ENCODE measurements at regions of chr3 and their contacts with region 1.

Region 1: GRCh38 chr3:120147072-120147871 is 53.0 kb upstream of the GSK3B start:
- DNase-seq: peak; percentile 47 to 60 (median 52)
- H3K4me3 ChIP-seq: no peak overlapping the region
- H3K4me3 Mint-ChIP-seq: no peak overlapping the region
- H3K27ac ChIP-seq: no peak overlapping the region
- H3K27ac Mint-ChIP-seq: peak overlapping the region in 1 of 7 donors; percentile 44
- H3K4me1 ChIP-seq: peaks cover 3% of the 10 kb centered on the region
- H3K4me1 Mint-ChIP-seq: peaks cover 4 to 13% (median 6%) of the 10 kb centered on the region in 4 donors
- H3K27me3 ChIP-seq: no peaks in the 10 kb centered on the region
- H3K27me3 Mint-ChIP-seq: no peaks in the 10 kb centered on the region

Region 2: GRCh38 chr3:119819806-119820205 is 327.5 kb before region 1 on chr3:
- CTCF ChIA-PET with region 1: interaction called, 9 read pairs
- POLR2A ChIA-PET with region 1: no interaction called
- intact Hi-C with region 1: loop called (anchors 1 kb)
- DNase-seq: no peak
- H3K4me3 ChIP-seq: no peak overlapping the region
- H3K4me3 Mint-ChIP-seq: no peak overlapping the region
- H3K27ac ChIP-seq: no peak overlapping the region
- H3K27ac Mint-ChIP-seq: peak overlapping the region in 1 of 7 donors; percentile 42
- H3K4me1 ChIP-seq: no peaks in the 10 kb centered on the region
- H3K4me1 Mint-ChIP-seq: peaks cover 0 to 6% (median 4%) of the 10 kb centered on the region in 4 donors
- H3K27me3 ChIP-seq: no peaks in the 10 kb centered on the region
- H3K27me3 Mint-ChIP-seq: peaks cover 0 to 4% of the 10 kb centered on the region in 2 donors

Region 3: GRCh38 chr3:119898478-119899191 is 248.6 kb before region 1 on chr3:
- CTCF ChIA-PET with region 1: interaction called, 181 read pairs
- POLR2A ChIA-PET with region 1: no interaction called
- intact Hi-C with region 1: no loop called
- DNase-seq: no peak
- H3K4me3 ChIP-seq: no peak overlapping the region
- H3K4me3 Mint-ChIP-seq: no peak overlapping the region
- H3K27ac ChIP-seq: no peak overlapping the region
- H3K27ac Mint-ChIP-seq: peak overlapping the region in 2 of 7 donors; percentile 41 to 53
- H3K4me1 ChIP-seq: no peaks in the 10 kb centered on the region
- H3K4me1 Mint-ChIP-seq: peaks cover 0 to 5% (median 0%) of the 10 kb centered on the region in 4 donors
- H3K27me3 ChIP-seq: no peaks in the 10 kb centered on the region
- H3K27me3 Mint-ChIP-seq: no peaks in the 10 kb centered on the region

Region 4: DNA sequence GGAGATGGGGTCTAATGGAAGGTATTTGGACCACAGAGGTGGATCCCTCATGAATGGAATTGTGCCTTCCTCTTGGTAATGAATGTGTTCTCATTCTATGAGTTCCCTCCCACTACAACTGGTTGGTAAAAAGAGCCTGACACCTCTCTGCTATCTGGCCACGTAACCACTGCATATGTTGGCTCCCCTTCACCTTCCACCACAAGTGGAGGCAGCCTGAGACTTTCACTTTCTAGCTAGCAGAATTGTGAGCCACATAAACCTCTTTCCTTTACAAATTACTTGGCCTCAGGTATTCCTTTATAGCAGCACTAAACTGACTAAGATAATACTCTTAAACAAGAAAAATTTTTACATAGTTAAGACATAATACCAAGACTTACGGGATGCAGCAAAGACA is 210.0 kb before region 1 on chr3:
- CTCF ChIA-PET with region 1: no interaction called
- POLR2A ChIA-PET with region 1: no interaction called
- intact Hi-C with region 1: no loop called
- DNase-seq: peak; percentile 16 to 43 (median 21)
- H3K4me3 ChIP-seq: no peak overlapping the region
- H3K4me3 Mint-ChIP-seq: peak overlapping the region; percentile 41 to 79 (median 68)
- H3K27ac ChIP-seq: no peak overlapping the region
- H3K27ac Mint-ChIP-seq: peak overlapping the region; percentile 0 to 93 (median 29)
- H3K4me1 ChIP-seq: peaks cover 26% of the 10 kb centered on the region
- H3K4me1 Mint-ChIP-seq: peaks cover 41 to 56% (median 50%) of the 10 kb centered on the region in 4 donors
- H3K27me3 ChIP-seq: no peaks in the 10 kb centered on the region
- H3K27me3 Mint-ChIP-seq: no peaks in the 10 kb centered on the region

Region 5: GRCh38 chr3:119976214-119976613 is 171.1 kb before region 1 on chr3:
- CTCF ChIA-PET with region 1: no interaction called
- POLR2A ChIA-PET with region 1: no interaction called
- intact Hi-C with region 1: no loop called
- DNase-seq: no peak
- H3K4me3 ChIP-seq: no peak overlapping the region
- H3K4me3 Mint-ChIP-seq: no peak overlapping the region
- H3K27ac ChIP-seq: no peak overlapping the region
- H3K27ac Mint-ChIP-seq: no peak overlapping the region
- H3K4me1 ChIP-seq: peaks cover 3% of the 10 kb centered on the region
- H3K4me1 Mint-ChIP-seq: peaks cover 31 to 54% (median 38%) of the 10 kb centered on the region in 4 donors
- H3K27me3 ChIP-seq: no peaks in the 10 kb centered on the region
- H3K27me3 Mint-ChIP-seq: no peaks in the 10 kb centered on the region

Region 6: DNA sequence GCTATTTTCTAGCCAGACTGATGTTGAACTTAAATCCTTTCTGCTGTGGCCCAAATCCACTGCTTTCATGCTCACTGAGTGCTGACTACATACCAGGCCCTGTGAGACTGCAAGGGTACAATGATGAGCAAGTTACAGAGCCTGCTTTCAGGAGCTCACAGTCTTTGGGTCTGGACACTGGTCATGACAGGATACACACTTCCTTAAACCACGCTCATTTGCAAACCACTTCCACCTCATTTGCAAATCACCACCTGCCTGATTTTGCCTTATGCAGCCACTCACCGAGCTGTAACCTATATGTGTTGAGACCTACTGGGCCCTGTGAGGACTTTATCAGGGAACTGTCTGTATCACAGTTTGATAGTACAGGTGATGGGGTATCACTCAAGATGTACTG is 252.1 kb after region 1 on chr3:
- CTCF ChIA-PET with region 1: no interaction called
- POLR2A ChIA-PET with region 1: no interaction called
- intact Hi-C with region 1: no loop called
- DNase-seq: no peak
- H3K4me3 ChIP-seq: no peak overlapping the region
- H3K4me3 Mint-ChIP-seq: no peak overlapping the region
- H3K27ac ChIP-seq: no peak overlapping the region
- H3K27ac Mint-ChIP-seq: no peak overlapping the region
- H3K4me1 ChIP-seq: no peaks in the 10 kb centered on the region
- H3K4me1 Mint-ChIP-seq: no peaks in the 10 kb centered on the region
- H3K27me3 ChIP-seq: no peaks in the 10 kb centered on the region
- H3K27me3 Mint-ChIP-seq: peaks cover 3% of the 10 kb centered on the region in 2 donors

Region 7: DNA sequence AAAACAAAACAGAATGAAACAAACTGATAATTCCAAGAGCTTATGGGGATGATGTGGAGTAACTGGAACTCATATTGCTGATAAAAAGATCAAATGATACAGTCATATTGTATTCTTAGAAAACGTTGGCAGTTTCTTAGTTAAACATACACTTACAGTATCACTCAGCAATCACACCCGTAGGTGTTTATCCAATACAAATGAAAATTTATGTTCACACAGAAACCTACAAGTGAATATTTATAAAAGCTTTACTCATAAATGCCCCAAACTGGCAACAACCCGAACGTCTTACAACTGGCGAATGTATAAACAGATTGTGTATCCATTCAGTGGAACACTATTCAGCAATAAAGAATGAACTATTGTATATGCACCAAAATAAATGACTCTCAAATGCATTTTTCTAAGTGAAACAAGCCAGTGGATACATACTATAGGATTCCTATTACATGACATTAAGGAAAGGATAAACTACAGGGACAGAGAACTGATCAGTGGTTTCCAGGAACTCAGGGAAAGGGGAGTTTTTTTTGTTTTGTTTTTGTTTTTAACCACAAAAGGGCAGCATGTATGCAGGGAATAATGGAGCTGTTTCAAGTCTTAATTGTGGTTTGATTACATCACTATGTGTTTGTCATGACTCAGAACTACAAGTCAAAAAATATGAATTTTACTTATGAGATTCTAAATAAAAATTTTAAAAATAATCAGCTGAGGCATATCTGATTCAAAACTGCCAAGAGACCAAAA is 377.1 kb after region 1 on chr3:
- CTCF ChIA-PET with region 1: no interaction called
- POLR2A ChIA-PET with region 1: no interaction called
- intact Hi-C with region 1: no loop called
- DNase-seq: no peak
- H3K4me3 ChIP-seq: no peak overlapping the region
- H3K4me3 Mint-ChIP-seq: no peak overlapping the region
- H3K27ac ChIP-seq: no peak overlapping the region
- H3K27ac Mint-ChIP-seq: no peak overlapping the region
- H3K4me1 ChIP-seq: no peaks in the 10 kb centered on the region
- H3K4me1 Mint-ChIP-seq: peaks cover 0 to 4% (median 3%) of the 10 kb centered on the region in 4 donors
- H3K27me3 ChIP-seq: no peaks in the 10 kb centered on the region
- H3K27me3 Mint-ChIP-seq: peaks cover 0 to 6% of the 10 kb centered on the region in 2 donors

Measured in CD4-positive, alpha-beta memory T cell (primary cell).